ENCODE measurements at regions of chrX and their contacts with region 1.

Region 1: GRCh38 chrX:40468033-40468846 is 112.5 kb upstream of the ATP6AP2 start:
- DNase-seq: no peak
- ATAC-seq: peak; percentile 66
- H3K4me3 Mint-ChIP-seq: no peak overlapping the region
- H3K27ac Mint-ChIP-seq: no peak overlapping the region
- H3K4me1 Mint-ChIP-seq: peaks cover 23% of the 10 kb centered on the region
- H3K27me3 Mint-ChIP-seq: peaks cover 12% of the 10 kb centered on the region
- CTCF ChIP-seq: no peak

Region 2: GRCh38 chrX:38754102-38754790 is 1714.0 kb before region 1 on chrX:
- CTCF ChIA-PET with region 1: no interaction called
- POLR2A ChIA-PET with region 1: no interaction called
- intact Hi-C with region 1: loop called (anchors 10 kb)
- DNase-seq: no peak
- ATAC-seq: peak; percentile 58
- H3K4me3 Mint-ChIP-seq: no peak overlapping the region
- H3K27ac Mint-ChIP-seq: no peak overlapping the region
- H3K4me1 Mint-ChIP-seq: no peaks in the 10 kb centered on the region
- H3K27me3 Mint-ChIP-seq: no peaks in the 10 kb centered on the region
- CTCF ChIP-seq: no peak

Region 3: DNA sequence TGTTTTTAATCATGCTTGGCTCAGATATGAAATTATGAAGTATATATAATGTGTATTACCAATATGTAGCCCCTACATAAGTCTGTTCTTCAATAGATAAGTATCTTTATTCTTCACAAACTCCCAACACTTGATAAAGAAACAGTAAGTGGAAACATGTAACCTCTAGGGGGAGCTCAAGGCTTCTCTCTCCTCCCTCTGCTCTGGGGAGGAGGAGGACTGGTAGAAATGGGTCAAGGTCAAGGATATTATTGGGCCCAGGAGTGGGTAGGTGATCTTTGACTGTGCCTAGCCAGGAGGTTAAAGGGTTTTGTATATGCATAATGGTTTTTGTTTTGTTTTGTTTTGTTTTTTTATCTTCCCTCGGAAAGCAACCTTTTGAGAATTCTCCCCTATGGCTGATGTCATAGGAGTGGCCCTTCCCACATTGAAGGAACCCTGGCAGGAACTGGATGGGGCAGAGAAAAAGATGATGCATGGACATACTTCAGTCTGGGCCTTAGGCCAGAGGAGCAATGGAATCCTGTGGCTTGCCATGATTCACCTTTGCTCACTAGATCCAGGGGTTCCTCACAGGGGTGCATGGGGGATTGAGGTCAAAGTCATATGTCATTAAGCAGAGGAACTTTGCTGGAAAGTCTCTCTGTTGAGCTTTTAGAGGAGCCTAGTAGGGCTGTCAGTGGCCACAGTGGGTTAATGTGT is 1206.6 kb before region 1 on chrX:
- CTCF ChIA-PET with region 1: no interaction called
- POLR2A ChIA-PET with region 1: no interaction called
- intact Hi-C with region 1: loop called (anchors 5 kb)
- DNase-seq: no peak
- ATAC-seq: no peak
- H3K4me3 Mint-ChIP-seq: no peak overlapping the region
- H3K27ac Mint-ChIP-seq: no peak overlapping the region
- H3K4me1 Mint-ChIP-seq: peaks cover 4% of the 10 kb centered on the region
- H3K27me3 Mint-ChIP-seq: no peaks in the 10 kb centered on the region
- CTCF ChIP-seq: no peak

Region 4: DNA sequence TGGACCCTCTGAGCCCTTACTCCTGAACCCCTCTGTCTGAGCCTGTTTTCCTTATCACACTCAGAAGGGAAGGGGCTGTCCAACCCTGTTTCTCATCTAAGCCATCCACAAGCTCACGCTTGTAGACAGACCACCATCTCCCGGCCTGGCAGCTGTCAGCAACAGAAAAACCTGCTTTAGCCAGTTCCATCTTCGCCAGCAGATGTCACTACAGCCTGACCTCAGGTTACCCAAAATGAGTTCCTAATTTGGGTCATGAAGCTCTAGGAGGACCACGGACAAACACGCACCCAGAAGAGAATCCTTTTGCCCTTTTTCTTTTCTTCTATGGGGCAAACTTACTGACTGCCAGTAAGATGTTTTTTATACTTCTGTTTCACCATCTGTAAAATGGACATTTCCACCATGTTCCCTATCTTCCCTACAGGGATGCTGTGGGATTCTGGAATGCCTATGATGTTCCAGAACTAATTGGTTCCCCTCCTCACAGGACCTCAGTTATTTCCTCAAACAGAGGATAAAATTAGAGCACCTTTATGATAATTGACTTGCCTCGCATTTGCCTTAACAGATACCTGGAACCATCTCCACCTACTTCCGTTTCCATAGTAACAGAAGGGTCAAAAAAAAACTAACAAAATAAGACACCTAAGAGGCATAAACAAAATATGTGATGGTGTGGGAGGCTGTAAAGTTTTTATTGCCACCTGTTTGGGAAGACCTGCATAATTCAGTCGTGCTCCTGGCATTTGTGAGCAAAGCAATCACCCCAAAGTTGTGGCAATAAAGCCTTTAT is 815.7 kb before region 1 on chrX:
- CTCF ChIA-PET with region 1: interaction called, 3 read pairs
- POLR2A ChIA-PET with region 1: no interaction called
- intact Hi-C with region 1: loop called (anchors 5 kb)
- DNase-seq: no peak
- ATAC-seq: no peak
- H3K4me3 Mint-ChIP-seq: no peak overlapping the region
- H3K27ac Mint-ChIP-seq: no peak overlapping the region
- H3K4me1 Mint-ChIP-seq: no peaks in the 10 kb centered on the region
- H3K27me3 Mint-ChIP-seq: peaks cover 13% of the 10 kb centered on the region
- CTCF ChIP-seq: no peak

Region 5: GRCh38 chrX:39730662-39731397 is 737.4 kb before region 1 on chrX:
- CTCF ChIA-PET with region 1: interaction called, 8 read pairs
- POLR2A ChIA-PET with region 1: no interaction called
- intact Hi-C with region 1: loop called (anchors 1 kb)
- DNase-seq: no peak
- ATAC-seq: peak; percentile 64
- H3K4me3 Mint-ChIP-seq: peak overlapping the region; percentile 53
- H3K27ac Mint-ChIP-seq: no peak overlapping the region
- H3K4me1 Mint-ChIP-seq: peaks cover 5% of the 10 kb centered on the region
- H3K27me3 Mint-ChIP-seq: peaks cover 8% of the 10 kb centered on the region
- CTCF ChIP-seq: no peak

Region 6: DNA sequence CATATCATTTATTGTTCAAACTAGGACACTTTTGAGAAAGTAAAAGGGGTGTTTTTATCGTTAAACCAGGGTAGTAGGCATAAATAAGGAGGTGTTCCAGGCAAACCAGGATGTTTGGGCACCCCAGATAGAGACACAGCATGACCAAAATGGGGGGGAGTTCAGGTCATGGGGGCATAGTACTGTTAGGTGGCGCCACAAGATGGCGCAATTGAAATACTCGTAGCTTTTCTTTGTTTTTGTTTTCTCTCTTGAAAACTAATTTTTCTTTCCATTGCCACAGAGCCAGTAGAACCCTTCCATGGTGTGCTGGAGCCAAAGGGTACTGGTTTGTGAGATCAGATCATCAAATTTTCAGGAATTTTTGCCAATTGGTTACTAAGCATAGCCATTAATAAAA is 653.8 kb before region 1 on chrX:
- CTCF ChIA-PET with region 1: no interaction called
- POLR2A ChIA-PET with region 1: no interaction called
- intact Hi-C with region 1: loop called (anchors 1 kb)
- DNase-seq: no peak
- ATAC-seq: no peak
- H3K4me3 Mint-ChIP-seq: no peak overlapping the region
- H3K27ac Mint-ChIP-seq: no peak overlapping the region
- H3K4me1 Mint-ChIP-seq: peaks cover 8% of the 10 kb centered on the region
- H3K27me3 Mint-ChIP-seq: peaks cover 11% of the 10 kb centered on the region
- CTCF ChIP-seq: no peak

Region 7: GRCh38 chrX:40006106-40007017 is 461.9 kb before region 1 on chrX:
- CTCF ChIA-PET with region 1: no interaction called
- POLR2A ChIA-PET with region 1: no interaction called
- intact Hi-C with region 1: loop called (anchors 5 kb)
- DNase-seq: no peak
- ATAC-seq: peak; percentile 33
- H3K4me3 Mint-ChIP-seq: peak overlapping the region; percentile 32
- H3K27ac Mint-ChIP-seq: no peak overlapping the region
- H3K4me1 Mint-ChIP-seq: peaks cover 31% of the 10 kb centered on the region
- H3K27me3 Mint-ChIP-seq: peaks cover 14% of the 10 kb centered on the region
- CTCF ChIP-seq: no peak

Region 8: GRCh38 chrX:40108959-40109287 is 359.3 kb before region 1 on chrX:
- CTCF ChIA-PET with region 1: no interaction called
- POLR2A ChIA-PET with region 1: no interaction called
- intact Hi-C with region 1: no loop called
- DNase-seq: peak; percentile 44
- ATAC-seq: peak; percentile 29
- H3K4me3 Mint-ChIP-seq: peak overlapping the region; percentile 64
- H3K27ac Mint-ChIP-seq: no peak overlapping the region
- H3K4me1 Mint-ChIP-seq: peaks cover 18% of the 10 kb centered on the region
- H3K27me3 Mint-ChIP-seq: no peaks in the 10 kb centered on the region
- CTCF ChIP-seq: no peak

Measured in activated B cell treated with CpG ODN at 0.5 μM for 24 hours (primary cell).